ENCODE measurements at regions of chr15 and their contacts with region 1.

Region 1: GRCh38 chr15:48367483-48367882 is 36.3 kb downstream of the DUT start:
- DNase-seq: no peak
- ATAC-seq: peak; percentile 58 to 60
- H3K4me3 ChIP-seq: no peak overlapping the region
- H3K27ac ChIP-seq: peak overlapping the region; percentile 36 to 60 (median 48)
- H3K4me1 ChIP-seq: no peaks in the 10 kb centered on the region
- H3K27me3 ChIP-seq: no peaks in the 10 kb centered on the region
- CTCF ChIP-seq: no peak
- POLR2A ChIP-seq: no peak

Region 2: DNA sequence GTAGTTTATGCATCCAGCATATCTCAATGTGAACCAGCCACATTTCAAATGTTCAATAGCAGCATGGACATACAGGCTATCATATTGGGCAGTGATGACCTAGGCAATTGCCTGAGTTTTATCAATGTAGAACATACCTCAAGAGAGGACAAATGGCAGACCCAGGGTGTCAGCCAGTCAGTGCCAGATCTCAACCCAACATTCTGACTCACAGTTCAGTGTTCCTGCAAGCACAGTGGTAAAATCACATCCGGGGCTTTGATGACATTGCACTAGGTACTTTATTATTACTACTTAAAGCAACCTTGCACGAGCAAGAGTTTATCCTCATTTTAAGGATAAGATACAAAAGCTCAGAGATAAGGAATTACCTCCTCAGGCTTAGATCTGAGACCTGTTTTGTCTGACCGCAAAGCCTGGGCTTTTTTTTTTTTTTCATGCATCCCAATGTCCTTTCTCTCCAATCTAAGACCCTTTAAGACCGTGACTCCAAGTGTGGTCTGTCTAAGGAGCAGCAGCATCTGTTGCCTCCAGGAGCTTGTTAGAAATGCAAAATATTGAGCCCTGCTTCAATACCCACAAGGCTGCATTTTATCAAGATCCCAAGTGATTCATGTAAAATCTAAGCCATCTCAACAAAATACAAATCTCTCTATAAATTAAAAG is 101.3 kb before region 1 on chr15:
- in situ Hi-C with region 1: no loop called
- intact Hi-C with region 1: no loop called
- DNase-seq: no peak
- ATAC-seq: no peak
- H3K4me3 ChIP-seq: no peak overlapping the region
- H3K27ac ChIP-seq: no peak overlapping the region
- H3K4me1 ChIP-seq: no peaks in the 10 kb centered on the region
- H3K27me3 ChIP-seq: no peaks in the 10 kb centered on the region
- CTCF ChIP-seq: no peak
- POLR2A ChIP-seq: no peak

Region 3: DNA sequence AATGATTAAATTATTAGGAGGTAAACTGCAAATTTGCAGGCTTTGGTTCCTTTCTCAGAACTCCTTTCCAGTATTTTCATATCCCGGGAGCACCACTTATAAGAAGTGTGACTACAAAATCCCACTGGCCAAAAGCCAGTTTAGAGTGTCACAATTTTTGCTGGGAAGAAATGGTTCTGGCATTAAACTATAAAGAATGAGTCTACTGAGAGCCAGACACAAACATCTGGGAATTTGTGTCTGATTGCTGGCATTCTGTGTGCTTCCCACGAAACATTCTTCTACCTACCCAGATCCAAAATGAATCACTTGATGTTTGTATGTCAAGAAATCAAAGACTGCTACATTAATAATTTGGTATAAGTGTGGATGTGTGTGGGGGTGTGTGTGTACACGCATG is 46.5 kb after region 1 on chr15:
- in situ Hi-C with region 1: no loop called
- intact Hi-C with region 1: loop called (anchors 5 kb)
- DNase-seq: peak; percentile 30 to 56
- ATAC-seq: peak; percentile 68 to 71
- H3K4me3 ChIP-seq: no peak overlapping the region
- H3K27ac ChIP-seq: peak overlapping the region; percentile 31 to 67 (median 64)
- H3K4me1 ChIP-seq: peaks cover 0 to 7% of the 10 kb centered on the region in 2 donors
- H3K27me3 ChIP-seq: no peaks in the 10 kb centered on the region
- CTCF ChIP-seq: no peak
- POLR2A ChIP-seq: no peak

Region 4: DNA sequence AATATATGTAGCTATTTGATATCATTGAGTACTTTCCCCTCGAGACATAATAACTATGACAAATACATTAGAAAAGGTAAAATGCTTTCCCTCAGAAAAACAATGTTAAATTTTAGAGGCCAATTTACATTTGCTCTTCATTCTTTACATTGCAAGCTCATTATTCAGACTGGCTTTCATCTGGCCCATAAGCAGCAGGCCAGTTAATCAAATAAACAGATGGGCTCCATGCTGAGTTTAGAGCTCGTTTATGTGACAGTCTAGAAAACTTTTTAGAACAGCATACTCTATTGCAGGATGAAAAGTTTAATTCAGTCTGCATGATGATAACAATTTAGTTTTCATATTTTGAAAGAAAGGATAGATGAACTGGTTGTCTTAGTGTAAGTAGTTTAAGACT is 114.3 kb after region 1 on chr15:
- in situ Hi-C with region 1: no loop called
- intact Hi-C with region 1: no loop called
- DNase-seq: no peak
- ATAC-seq: no peak
- H3K4me3 ChIP-seq: no peak overlapping the region
- H3K27ac ChIP-seq: no peak overlapping the region
- H3K4me1 ChIP-seq: no peaks in the 10 kb centered on the region
- H3K27me3 ChIP-seq: no peaks in the 10 kb centered on the region
- CTCF ChIP-seq: no peak
- POLR2A ChIP-seq: no peak